ENCODE measurements at regions of chr6 and their contacts with region 1.

Region 1: GRCh38 chr6:43143235-43144124 is 27.6 kb upstream of the SRF start:
- DNase-seq: peak; percentile 64 to 90 (median 79)
- ATAC-seq: peak; percentile 74
- H3K4me3 ChIP-seq: peak overlapping the region; percentile 40 to 48
- H3K4me3 Mint-ChIP-seq: peak overlapping the region; percentile 87
- H3K27ac ChIP-seq: peak overlapping the region; percentile 67 to 73
- H3K27ac Mint-ChIP-seq: peak overlapping the region; percentile 99
- H3K4me1 ChIP-seq: peaks cover 30% of the 10 kb centered on the region
- H3K4me1 Mint-ChIP-seq: peaks cover 32% of the 10 kb centered on the region
- H3K27me3 ChIP-seq: no peaks in the 10 kb centered on the region
- H3K27me3 Mint-ChIP-seq: no peaks in the 10 kb centered on the region
- CTCF ChIP-seq: peak; percentile 80

Region 2: DNA sequence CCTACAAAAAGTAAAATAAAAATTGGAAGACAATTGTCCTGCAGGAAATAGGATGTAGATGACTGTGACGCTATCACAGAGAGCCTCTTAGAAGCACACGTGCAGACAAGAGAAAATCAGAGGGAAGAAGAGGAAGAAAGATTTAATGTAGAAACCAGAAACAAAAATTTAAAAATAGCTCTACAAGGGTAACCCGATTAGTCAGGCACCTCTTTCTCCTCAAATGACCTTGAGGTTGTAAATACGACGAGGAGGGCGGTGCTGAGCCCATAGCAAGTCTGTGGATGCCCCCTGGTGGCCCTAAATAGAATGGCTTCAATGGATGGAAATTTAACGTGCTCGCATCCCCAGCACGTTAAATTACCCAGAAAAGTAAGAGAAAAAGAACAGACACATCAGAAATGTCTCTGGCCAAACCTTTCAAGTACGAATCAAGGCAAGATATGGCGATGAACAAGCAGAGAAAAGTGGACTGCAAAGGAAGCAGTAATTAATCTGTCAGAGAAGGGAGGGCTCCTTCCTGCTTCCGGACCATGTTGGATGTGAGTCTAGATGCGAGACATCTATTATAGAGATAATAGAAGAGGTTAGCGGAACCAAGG is 416.9 kb before region 1 on chr6:
- CTCF ChIA-PET with region 1: no interaction called
- POLR2A ChIA-PET with region 1: no interaction called
- intact Hi-C with region 1: loop called in 1 of 2 experiments (anchors 10 kb)
- DNase-seq: peak; percentile 29 to 95 (median 76)
- ATAC-seq: peak; percentile 98
- H3K4me3 ChIP-seq: peak overlapping the region; percentile 54 to 73
- H3K4me3 Mint-ChIP-seq: peak overlapping the region; percentile 88
- H3K27ac ChIP-seq: peak overlapping the region; percentile 75 to 85
- H3K27ac Mint-ChIP-seq: peak overlapping the region; percentile 97
- H3K4me1 ChIP-seq: peaks cover 13% of the 10 kb centered on the region
- H3K4me1 Mint-ChIP-seq: peaks cover 17% of the 10 kb centered on the region
- H3K27me3 ChIP-seq: no peaks in the 10 kb centered on the region
- H3K27me3 Mint-ChIP-seq: no peaks in the 10 kb centered on the region
- CTCF ChIP-seq: peak; percentile 88

Region 3: DNA sequence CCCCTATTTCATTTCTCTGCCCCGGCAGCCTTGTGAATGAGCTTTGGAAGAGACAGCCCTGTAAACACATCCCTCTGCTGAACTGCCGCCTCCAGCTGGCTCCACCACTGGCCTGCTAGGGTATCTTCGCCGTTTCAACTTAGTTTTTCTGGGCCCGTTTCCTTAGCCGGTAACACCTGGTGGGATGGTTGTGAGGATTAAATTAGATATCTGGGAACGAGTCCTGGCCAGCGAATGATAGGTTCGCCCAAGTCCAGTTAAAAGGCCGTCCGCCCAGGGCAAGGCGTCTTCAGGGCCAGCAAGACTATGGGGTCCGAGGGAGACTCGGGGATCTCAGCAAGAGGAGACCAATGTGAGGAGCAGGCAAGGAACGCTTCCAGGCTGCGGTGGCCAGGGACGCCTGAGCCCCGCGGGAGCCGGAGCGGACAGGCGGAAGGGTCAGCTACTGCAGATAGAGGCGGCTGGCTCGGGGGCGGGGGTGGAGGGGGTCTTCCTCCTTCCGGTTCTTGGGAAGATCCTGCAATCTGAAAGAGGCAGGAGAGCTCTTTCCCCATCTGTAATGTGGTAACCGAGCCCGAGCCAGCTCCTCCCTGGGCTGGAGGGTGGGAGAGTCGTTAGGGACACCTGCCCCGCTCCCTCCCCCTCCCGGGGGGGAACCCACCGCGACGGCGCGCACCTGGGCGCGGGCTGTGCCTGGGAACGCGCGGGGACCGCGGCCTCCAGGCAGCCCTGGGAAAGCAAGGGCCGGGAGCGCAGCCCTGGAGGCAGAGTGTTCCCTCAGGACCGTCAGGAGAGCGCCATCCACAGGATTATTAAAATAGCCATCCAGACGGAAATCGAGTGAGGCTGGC is 232.1 kb before region 1 on chr6:
- CTCF ChIA-PET with region 1: interaction called, 13 read pairs
- POLR2A ChIA-PET with region 1: interaction called, 3 read pairs
- intact Hi-C with region 1: no loop called
- DNase-seq: no peak
- ATAC-seq: peak; percentile 34
- H3K4me3 ChIP-seq: peak overlapping the region; percentile 8 to 15
- H3K4me3 Mint-ChIP-seq: peak overlapping the region; percentile 78
- H3K27ac ChIP-seq: no peak overlapping the region
- H3K27ac Mint-ChIP-seq: no peak overlapping the region
- H3K4me1 ChIP-seq: no peaks in the 10 kb centered on the region
- H3K4me1 Mint-ChIP-seq: peaks cover 4% of the 10 kb centered on the region
- H3K27me3 ChIP-seq: peaks cover 0 to 4% of the 10 kb centered on the region in 2 experiments
- H3K27me3 Mint-ChIP-seq: peaks cover 14% of the 10 kb centered on the region
- CTCF ChIP-seq: no peak

Region 4: DNA sequence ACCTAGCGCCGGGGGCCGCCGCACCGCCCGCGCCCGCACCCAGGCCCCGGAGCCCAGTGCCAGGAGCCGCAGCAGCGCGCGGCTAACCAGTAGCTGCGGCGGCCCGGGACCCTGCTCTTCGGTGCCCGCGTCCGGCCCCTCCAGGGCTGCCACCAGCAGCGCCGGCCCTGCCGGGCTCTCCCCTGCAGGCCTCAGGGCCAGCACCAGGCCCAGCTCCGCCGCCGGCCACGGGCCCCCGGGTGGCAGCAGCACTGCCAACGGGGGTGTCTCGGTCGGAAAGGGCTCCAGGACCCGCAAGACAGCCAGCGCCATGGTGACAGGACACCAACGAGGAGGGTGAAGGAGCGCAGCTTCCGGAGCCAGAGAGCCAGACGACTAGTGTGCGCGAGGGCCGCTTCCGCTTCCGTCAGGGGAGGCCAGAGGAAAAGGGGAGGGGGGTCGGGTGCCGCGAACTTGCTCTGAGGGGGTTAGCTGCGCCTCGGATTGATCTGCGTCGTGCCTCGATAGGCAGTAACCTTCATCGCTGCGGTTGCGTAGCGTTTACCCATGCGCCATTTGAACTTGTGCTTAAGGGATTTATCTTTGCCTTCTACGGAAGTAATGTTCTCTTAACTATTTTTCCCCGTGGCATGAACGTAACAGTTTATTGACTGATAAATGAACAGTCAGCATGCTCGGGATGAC is 164.5 kb before region 1 on chr6 and contains the start of gene PEX6:
- CTCF ChIA-PET with region 1: interaction called, 4 read pairs
- POLR2A ChIA-PET with region 1: interaction called, 18 read pairs
- intact Hi-C with region 1: loop called (anchors 1 to 2 kb)
- DNase-seq: peak; percentile 77 to 98 (median 94)
- ATAC-seq: peak; percentile 89
- H3K4me3 ChIP-seq: peak within 1 kb of the TSS; percentile 49 to 71
- H3K4me3 Mint-ChIP-seq: peak within 1 kb of the TSS; percentile 90
- H3K27ac ChIP-seq: peak within 1 kb of the TSS; percentile 64 to 89
- H3K27ac Mint-ChIP-seq: peak within 1 kb of the TSS; percentile 95
- H3K4me1 ChIP-seq: peaks cover 45% of the 10 kb centered on the region
- H3K4me1 Mint-ChIP-seq: peaks cover 55% of the 10 kb centered on the region
- H3K27me3 ChIP-seq: no peaks in the 10 kb centered on the region
- H3K27me3 Mint-ChIP-seq: no peaks in the 10 kb centered on the region
- CTCF ChIP-seq: no peak
- total RNA-seq, gene PEX6: 6.7 to 6.8 TPM

Region 5: DNA sequence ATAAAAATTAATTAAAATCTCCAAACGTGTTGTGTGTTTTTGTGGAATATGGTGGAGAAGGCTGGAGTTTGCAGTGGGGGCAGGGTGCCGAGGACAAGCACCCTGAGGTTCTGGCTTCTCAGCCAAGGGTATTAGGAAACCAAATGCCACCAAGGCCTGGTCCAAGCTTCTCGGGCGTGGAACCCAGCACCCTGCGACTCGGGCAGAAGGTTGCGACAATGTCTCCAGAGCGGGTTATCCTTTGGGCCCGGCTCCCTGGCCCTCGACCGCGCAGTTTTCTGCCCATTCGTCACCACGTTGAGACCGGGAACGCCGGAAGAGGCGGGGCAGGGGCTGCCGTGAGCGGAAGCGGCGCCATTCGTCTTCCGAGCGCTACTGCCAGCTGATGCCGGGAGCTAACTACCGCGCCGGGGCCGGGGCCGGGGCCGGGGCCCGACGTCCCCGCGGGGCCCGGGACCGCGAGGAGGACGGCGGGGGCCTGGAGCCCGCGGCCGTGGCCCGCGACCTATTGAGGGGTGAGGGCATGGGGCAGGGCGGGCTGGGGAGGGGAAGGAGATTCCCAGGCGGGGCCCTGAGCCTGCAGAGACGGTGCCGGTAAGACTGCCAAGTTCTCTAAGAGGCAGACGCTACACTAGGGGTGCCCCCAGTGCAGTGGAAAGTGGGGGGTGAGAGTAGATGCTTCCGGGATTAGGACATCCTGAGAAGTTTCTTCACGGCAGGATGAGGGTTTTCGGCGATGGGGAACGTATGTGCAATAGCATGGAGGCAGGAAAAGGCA is 122.0 kb before region 1 on chr6 and contains the start of gene RRP36:
- CTCF ChIA-PET with region 1: interaction called, 10 read pairs
- POLR2A ChIA-PET with region 1: no interaction called
- intact Hi-C with region 1: no loop called
- DNase-seq: peak in 8 of 9 experiments; percentile 54 to 81 (median 72)
- ATAC-seq: peak; percentile 78
- H3K4me3 ChIP-seq: peak within 1 kb of the TSS; percentile 93 to 94
- H3K4me3 Mint-ChIP-seq: peak within 1 kb of the TSS; percentile 99
- H3K27ac ChIP-seq: peak within 1 kb of the TSS; percentile 78 to 83
- H3K27ac Mint-ChIP-seq: peak within 1 kb of the TSS; percentile 96
- H3K4me1 ChIP-seq: peaks cover 21% of the 10 kb centered on the region
- H3K4me1 Mint-ChIP-seq: peaks cover 44% of the 10 kb centered on the region
- H3K27me3 ChIP-seq: no peaks in the 10 kb centered on the region
- H3K27me3 Mint-ChIP-seq: no peaks in the 10 kb centered on the region
- CTCF ChIP-seq: no peak
- total RNA-seq, gene RRP36: 20.1 to 20.2 TPM

Region 6: GRCh38 chr6:43070028-43070632 is 73.3 kb before region 1 on chr6:
- CTCF ChIA-PET with region 1: interaction called, 5 read pairs
- POLR2A ChIA-PET with region 1: no interaction called
- intact Hi-C with region 1: loop called (anchors 1 kb)
- DNase-seq: peak in 2 of 9 experiments; percentile 55 to 72
- ATAC-seq: peak; percentile 78
- H3K4me3 ChIP-seq: no peak overlapping the region
- H3K4me3 Mint-ChIP-seq: no peak overlapping the region
- H3K27ac ChIP-seq: no peak overlapping the region
- H3K27ac Mint-ChIP-seq: no peak overlapping the region
- H3K4me1 ChIP-seq: no peaks in the 10 kb centered on the region
- H3K4me1 Mint-ChIP-seq: peaks cover 2% of the 10 kb centered on the region
- H3K27me3 ChIP-seq: no peaks in the 10 kb centered on the region
- H3K27me3 Mint-ChIP-seq: no peaks in the 10 kb centered on the region
- CTCF ChIP-seq: peak; percentile 62